ENCODE measurements at regions of chr5 and their contacts with region 1.

Region 1: GRCh38 chr5:34522599-34523386 is 133.3 kb upstream of the RAI14 start:
- DNase-seq: peak; percentile 60
- H3K4me3 Mint-ChIP-seq: no peak overlapping the region
- H3K27ac Mint-ChIP-seq: no peak overlapping the region
- H3K4me1 Mint-ChIP-seq: peaks cover 4% of the 10 kb centered on the region
- H3K27me3 Mint-ChIP-seq: peaks cover 4% of the 10 kb centered on the region

Region 2: GRCh38 chr5:34474573-34475021 is 48.2 kb before region 1 on chr5:
- CTCF ChIA-PET with region 1: interaction called, 12 read pairs
- POLR2A ChIA-PET with region 1: no interaction called
- intact Hi-C with region 1: no loop called
- DNase-seq: no peak
- H3K4me3 Mint-ChIP-seq: no peak overlapping the region
- H3K27ac Mint-ChIP-seq: no peak overlapping the region
- H3K4me1 Mint-ChIP-seq: no peaks in the 10 kb centered on the region
- H3K27me3 Mint-ChIP-seq: peaks cover 13% of the 10 kb centered on the region

Region 3: DNA sequence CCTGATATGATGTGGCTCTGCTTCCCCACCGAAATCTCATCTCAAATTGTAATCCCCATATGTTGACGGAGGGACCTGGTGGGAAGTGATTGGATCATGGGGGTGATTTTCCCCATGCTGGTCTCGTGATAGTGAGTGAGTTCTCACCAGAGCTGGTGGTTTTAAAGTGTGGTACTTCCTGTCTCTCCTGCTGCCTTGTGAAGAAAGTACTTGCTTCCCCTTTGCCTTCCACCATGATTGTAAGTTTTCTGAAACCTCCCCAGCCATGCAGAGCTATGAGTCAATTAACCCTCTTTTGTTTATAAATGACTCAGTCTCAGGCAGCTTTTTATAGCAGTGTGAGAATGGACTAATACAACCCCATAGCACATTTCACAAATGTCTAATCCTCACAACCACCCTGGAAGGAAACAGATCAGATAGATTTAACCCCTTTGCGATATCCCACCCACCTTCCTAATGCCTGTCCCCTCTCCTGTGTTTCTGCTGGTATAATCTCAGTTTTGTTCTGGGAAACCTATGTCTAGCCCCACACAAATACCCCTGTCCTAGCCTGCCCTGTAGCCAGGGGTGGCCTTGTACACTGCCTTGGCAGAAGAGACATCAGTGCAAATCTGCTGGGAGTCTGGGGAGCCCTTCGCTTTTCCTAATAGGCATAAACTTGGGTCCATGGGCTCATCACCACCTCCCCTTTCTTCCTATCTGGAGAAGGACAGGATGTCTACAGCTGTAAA is 23.6 kb before region 1 on chr5:
- CTCF ChIA-PET with region 1: interaction called, 7 read pairs
- POLR2A ChIA-PET with region 1: no interaction called
- intact Hi-C with region 1: loop called (anchors 1 kb)
- DNase-seq: peak; percentile 45
- H3K4me3 Mint-ChIP-seq: peak overlapping the region; percentile 17
- H3K27ac Mint-ChIP-seq: peak overlapping the region; percentile 49
- H3K4me1 Mint-ChIP-seq: peaks cover 13% of the 10 kb centered on the region
- H3K27me3 Mint-ChIP-seq: peaks cover 23% of the 10 kb centered on the region

Region 4: DNA sequence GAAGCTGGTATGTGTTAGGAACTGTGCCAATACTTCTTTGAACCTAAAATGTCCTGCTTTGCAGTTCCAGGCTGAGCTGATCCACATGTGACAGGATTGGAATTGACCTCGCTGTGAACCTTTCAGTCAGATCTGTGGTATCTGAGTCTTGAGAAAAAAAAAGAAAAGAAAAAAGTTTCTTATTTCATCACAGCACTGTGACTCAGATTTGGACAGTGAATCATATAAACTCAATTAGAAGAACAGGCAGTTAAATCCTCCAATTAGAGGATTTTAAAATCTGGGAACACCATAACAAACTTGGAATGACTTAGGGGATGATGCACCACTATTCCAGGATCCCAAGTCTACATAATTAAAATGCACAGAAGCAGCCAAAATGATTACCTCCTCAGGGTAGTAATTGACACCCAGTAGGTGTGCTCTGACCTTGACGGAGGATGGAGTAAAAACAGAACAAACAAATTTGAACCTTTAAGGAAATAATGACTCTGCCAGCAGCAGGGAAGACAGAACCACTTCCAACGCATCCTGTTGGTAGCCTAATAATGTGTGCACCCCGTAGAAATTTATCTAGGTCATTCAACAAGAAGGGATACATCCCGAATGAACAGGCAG is 75.5 kb after region 1 on chr5:
- CTCF ChIA-PET with region 1: no interaction called
- POLR2A ChIA-PET with region 1: no interaction called
- intact Hi-C with region 1: no loop called
- DNase-seq: no peak
- H3K4me3 Mint-ChIP-seq: no peak overlapping the region
- H3K27ac Mint-ChIP-seq: no peak overlapping the region
- H3K4me1 Mint-ChIP-seq: peaks cover 5% of the 10 kb centered on the region
- H3K27me3 Mint-ChIP-seq: peaks cover 10% of the 10 kb centered on the region

Region 5: DNA sequence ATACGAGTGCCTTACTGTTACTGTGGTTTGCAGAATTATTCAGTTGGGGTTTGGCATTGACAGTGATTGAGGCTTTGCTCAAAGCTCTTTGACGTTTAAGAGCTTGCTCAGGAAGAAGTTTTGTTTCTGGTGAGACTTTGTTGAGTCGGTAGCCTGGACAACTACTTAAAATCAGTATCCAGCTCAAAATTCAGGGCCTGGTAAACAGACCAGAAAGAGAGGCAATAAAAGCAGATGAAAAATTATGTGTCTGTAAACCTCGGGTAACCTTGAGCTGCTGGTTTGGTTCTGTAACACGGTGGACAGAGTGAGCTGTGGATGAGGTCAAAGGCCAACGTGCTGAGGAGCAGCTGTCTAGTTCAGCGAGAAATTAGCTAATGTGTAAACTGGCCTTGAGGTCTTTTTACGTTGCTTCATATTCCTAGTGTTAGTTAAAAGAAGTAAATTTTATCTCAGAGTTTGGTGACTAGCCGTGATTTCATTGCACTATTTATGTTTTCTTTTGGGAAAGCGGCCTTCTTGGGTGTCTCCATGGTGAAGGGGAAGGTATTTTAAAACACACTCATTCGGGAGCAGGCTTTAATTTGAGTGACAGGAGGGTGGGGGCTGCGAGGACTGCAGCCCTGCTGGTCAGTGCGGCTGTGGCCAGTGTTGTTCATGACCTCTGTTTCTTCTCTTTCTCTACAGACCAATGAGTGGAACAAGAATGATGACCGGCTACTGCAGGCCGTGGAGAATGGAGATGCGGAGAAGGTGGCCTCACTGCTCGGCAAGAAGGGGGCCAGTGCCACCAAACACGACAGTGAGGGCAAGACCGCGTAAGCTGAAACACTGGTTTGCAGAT is 234.2 kb after region 1 on chr5:
- CTCF ChIA-PET with region 1: no interaction called
- POLR2A ChIA-PET with region 1: no interaction called
- intact Hi-C with region 1: no loop called
- DNase-seq: no peak
- H3K4me3 Mint-ChIP-seq: no peak overlapping the region
- H3K27ac Mint-ChIP-seq: no peak overlapping the region
- H3K4me1 Mint-ChIP-seq: no peaks in the 10 kb centered on the region
- H3K27me3 Mint-ChIP-seq: no peaks in the 10 kb centered on the region

Region 6: GRCh38 chr5:34898258-34898895 is 375.6 kb after region 1 on chr5:
- CTCF ChIA-PET with region 1: interaction called, 42 read pairs
- POLR2A ChIA-PET with region 1: no interaction called
- intact Hi-C with region 1: loop called (anchors 1 kb)
- DNase-seq: peak; percentile 67
- H3K4me3 Mint-ChIP-seq: no peak overlapping the region
- H3K27ac Mint-ChIP-seq: no peak overlapping the region
- H3K4me1 Mint-ChIP-seq: no peaks in the 10 kb centered on the region
- H3K27me3 Mint-ChIP-seq: no peaks in the 10 kb centered on the region

Region 7: GRCh38 chr5:35003018-35003957 is 480.5 kb after region 1 on chr5:
- CTCF ChIA-PET with region 1: interaction called, 11 read pairs
- POLR2A ChIA-PET with region 1: no interaction called
- intact Hi-C with region 1: loop called (anchors 1 kb)
- DNase-seq: peak; percentile 69
- H3K4me3 Mint-ChIP-seq: no peak overlapping the region
- H3K27ac Mint-ChIP-seq: no peak overlapping the region
- H3K4me1 Mint-ChIP-seq: no peaks in the 10 kb centered on the region
- H3K27me3 Mint-ChIP-seq: peaks cover 29% of the 10 kb centered on the region